ENCODE measurements at regions of chr13 and their contacts with region 1.

Region 1: GRCh38 chr13:42271337-42272114 is 426 bp upstream of the AKAP11 start:
- DNase-seq: peak; percentile 93
- ATAC-seq: peak; percentile 70
- H3K4me3 ChIP-seq: peak overlapping the region; percentile 83
- H3K27ac ChIP-seq: peak overlapping the region; percentile 68
- H3K4me1 ChIP-seq: peaks cover 8 to 15% of the 10 kb centered on the region in 2 experiments; a peak in 4 of 5 replicates
- H3K27me3 ChIP-seq: no peaks in the 10 kb centered on the region
- CTCF ChIP-seq: peak in 1 of 3 experiments; percentile 18; a peak in 1 of 6 replicates
- EP300 ChIP-seq: no peak
- POLR2A ChIP-seq: no peak
- RAD21 ChIP-seq: no peak

Region 2: DNA sequence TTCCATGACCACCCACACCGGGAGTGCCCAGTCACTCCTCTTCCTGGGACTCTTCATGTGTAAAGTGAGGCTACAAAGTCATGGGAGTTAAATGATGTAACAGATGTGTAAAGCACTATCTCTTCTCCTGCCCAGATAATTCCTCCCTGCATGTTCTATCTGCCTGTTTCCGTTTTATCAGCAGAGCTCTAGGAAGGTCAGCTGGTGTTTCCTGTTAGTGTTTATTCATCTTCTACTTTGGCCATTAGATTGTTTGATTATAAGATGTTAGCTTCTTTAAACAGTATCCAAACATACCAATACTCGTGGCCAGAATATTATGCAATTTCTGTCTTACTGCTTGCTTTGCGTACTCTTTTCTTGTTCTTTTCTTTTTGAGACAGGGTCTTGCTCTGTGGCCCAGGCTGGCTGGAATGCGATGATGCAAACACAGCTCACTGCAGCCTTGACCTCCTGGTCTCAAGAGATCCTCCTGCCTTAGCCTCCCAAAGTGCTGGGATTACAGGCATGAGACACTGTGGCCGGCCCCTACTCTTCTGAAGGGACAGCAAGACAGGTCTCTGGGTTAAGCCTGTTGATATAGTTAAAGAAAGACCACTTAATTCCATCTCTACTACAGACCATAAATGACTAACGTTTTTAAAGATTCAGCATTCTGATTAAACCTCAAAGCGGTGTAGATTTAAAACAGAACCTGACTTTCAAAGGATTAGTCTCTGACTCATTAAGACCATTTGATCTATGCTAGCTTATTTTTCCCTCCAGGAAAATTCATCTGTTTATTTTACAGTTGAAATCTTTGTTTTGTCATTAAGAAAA is 97.0 kb before region 1 on chr13:
- CTCF ChIA-PET with region 1: no interaction called
- POLR2A ChIA-PET with region 1: no interaction called
- in situ Hi-C with region 1: no loop called
- intact Hi-C with region 1: loop called (anchors 5 kb)
- DNase-seq: peak; percentile 6 to 50 (median 14)
- ATAC-seq: peak; percentile 94
- H3K4me3 ChIP-seq: no peak overlapping the region
- H3K27ac ChIP-seq: peak overlapping the region; percentile 75
- H3K4me1 ChIP-seq: peaks cover 0 to 10% of the 10 kb centered on the region in 2 experiments; a peak in 2 of 5 replicates
- H3K27me3 ChIP-seq: no peaks in the 10 kb centered on the region
- CTCF ChIP-seq: no peak
- EP300 ChIP-seq: peak; percentile 91
- POLR2A ChIP-seq: no peak
- RAD21 ChIP-seq: no peak

Measured in K562 (cell line).